ENCODE measurements at regions of chr5 and their contacts with region 1.

Region 1: DNA sequence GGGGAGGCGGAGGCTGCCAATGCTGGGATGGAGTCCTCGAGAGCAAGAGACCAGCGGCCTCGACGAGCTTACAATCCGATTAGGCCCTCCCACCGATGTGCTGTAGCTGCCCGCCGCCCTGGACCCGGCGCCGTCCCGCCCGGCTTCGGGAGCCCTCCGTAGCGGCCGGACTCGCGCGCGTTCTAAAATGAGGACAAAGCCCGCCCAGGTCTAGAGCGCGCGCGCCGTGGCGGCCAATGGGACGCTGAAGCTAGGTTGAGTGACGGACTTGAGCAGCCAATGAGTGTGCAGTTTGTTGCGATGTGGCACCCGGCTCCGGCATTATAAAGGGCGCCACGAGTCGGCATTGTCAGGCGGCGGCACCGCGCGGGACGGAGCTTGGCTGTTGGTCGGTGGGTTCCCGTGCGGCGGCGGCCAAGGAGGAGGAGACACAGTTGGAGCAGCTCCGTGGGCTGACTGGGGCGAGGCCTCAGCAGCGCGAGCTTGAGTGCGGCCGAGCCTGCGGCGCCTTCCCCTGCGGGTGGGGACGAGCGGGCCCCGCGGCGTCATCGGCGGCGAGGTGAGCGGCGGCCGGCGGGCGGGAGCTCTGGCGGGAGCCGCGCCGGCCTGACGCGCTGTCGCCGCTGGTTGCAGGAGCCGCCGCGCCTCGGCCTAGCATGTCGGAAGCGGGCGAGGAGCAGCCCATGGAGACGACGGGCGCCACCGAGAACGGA is at the start of gene HNRNPAB:
- DNase-seq: peak; percentile 94 to 95 (median 95)
- H3K4me3 ChIP-seq: peak within 1 kb of the TSS; percentile 85 to 98
- H3K4me3 Mint-ChIP-seq: peak within 1 kb of the TSS; percentile 97 to 100 (median 99)
- H3K27ac ChIP-seq: peak within 1 kb of the TSS; percentile 73
- H3K27ac Mint-ChIP-seq: peak within 1 kb of the TSS; percentile 97 to 100 (median 99)
- H3K4me1 ChIP-seq: peaks cover 37% of the 10 kb centered on the region
- H3K4me1 Mint-ChIP-seq: peaks cover 15 to 46% (median 27%) of the 10 kb centered on the region in 4 donors
- H3K27me3 ChIP-seq: no peaks in the 10 kb centered on the region
- H3K27me3 Mint-ChIP-seq: peaks cover 2% of the 10 kb centered on the region in 2 donors
- total RNA-seq, gene HNRNPAB: 82.1 to 85.3 TPM

Region 2: DNA sequence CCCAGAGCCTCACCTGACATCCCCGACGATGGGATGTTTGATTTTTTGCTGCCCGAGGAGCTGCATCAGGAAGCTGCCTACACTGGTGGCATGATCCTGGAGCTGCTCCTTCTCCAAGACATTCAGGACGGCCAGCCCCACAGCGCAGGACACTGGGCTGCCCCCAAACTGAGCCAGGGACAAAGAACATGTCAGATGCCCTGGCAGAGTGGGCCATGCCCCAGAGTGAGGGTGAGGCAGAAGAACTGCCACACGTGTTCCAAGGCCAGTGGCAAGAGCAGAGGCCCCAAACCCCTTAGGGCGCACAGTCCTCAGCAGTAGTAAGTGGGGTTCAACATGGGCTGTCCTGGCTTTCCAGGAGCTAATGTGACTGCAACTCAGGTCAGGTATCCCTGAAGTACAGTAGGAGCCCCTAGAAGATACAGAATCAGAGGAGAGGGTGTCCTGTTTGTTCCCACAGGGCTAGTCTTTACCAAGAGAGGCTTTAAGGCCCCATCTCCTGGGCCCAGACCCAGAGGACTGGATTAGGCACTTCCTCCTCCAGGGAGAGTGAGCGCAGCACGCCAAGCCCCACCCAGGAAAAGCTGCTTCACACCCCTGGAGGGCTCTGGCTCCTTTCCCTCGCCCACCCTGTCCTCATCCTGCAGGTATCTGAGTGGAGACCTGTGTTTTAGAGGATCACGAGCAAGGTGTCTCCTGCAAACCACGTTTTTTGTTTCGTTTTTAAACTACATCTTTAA is 11.1 kb after region 1 on chr5:
- CTCF ChIA-PET with region 1: interaction called, 8 read pairs
- POLR2A ChIA-PET with region 1: interaction called, 16 read pairs
- intact Hi-C with region 1: no loop called
- DNase-seq: no peak
- H3K4me3 ChIP-seq: no peak overlapping the region
- H3K4me3 Mint-ChIP-seq: no peak overlapping the region
- H3K27ac ChIP-seq: no peak overlapping the region
- H3K27ac Mint-ChIP-seq: peak overlapping the region in 4 of 7 donors; percentile 11 to 51 (median 36)
- H3K4me1 ChIP-seq: peaks cover 3% of the 10 kb centered on the region
- H3K4me1 Mint-ChIP-seq: peaks cover 10 to 13% (median 12%) of the 10 kb centered on the region in 4 donors
- H3K27me3 ChIP-seq: no peaks in the 10 kb centered on the region
- H3K27me3 Mint-ChIP-seq: no peaks in the 10 kb centered on the region

Region 3: GRCh38 chr5:178232124-178232919 is 28.0 kb after region 1 on chr5 and contains the start of gene PHYKPL:
- CTCF ChIA-PET with region 1: interaction called, 4 read pairs
- POLR2A ChIA-PET with region 1: interaction called, 72 read pairs
- intact Hi-C with region 1: loop called (anchors 1 kb)
- DNase-seq: peak; percentile 61 to 71 (median 65)
- H3K4me3 ChIP-seq: peak within 1 kb of the TSS; percentile 62 to 74
- H3K4me3 Mint-ChIP-seq: peak within 1 kb of the TSS; percentile 82 to 90 (median 86)
- H3K27ac ChIP-seq: peak within 1 kb of the TSS; percentile 82
- H3K27ac Mint-ChIP-seq: peak within 1 kb of the TSS; percentile 87 to 95 (median 91)
- H3K4me1 ChIP-seq: peaks cover 49% of the 10 kb centered on the region
- H3K4me1 Mint-ChIP-seq: peaks cover 25 to 74% (median 56%) of the 10 kb centered on the region in 4 donors
- H3K27me3 ChIP-seq: no peaks in the 10 kb centered on the region
- H3K27me3 Mint-ChIP-seq: no peaks in the 10 kb centered on the region
- total RNA-seq, gene PHYKPL: 234 to 251 TPM

Region 4: DNA sequence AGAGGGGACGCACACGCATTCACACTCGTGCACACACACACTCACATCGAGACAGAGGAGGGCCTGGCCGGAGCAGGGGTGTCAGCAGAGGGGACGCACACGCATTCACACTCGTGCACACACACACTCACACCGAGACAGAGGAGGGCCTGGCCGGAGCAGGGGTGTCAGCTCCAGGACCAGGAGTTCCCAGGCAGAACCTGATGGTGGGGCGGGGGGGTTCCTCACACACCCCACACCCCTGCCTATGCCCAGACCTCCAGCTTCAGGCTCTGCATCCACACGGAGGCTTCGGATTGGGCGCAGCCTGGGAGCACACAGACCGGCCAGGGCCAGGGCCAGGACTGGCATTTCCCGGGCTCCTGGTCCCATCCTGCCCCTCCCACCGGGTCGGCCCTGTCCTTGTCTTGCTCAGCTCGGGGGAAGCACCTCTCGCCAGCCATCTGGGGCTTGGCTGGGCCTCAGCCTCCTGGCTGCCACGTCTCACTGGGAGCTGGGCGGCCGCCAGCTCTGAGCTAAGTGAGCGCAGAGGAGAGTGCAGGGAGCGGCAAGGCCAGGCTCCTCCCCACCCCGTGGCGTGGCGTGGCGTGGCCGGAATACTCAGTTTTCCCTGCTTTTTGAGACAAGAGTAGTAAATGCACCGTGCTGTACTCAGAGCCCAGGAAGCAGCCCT is 1109.6 kb after region 1 on chr5:
- CTCF ChIA-PET with region 1: no interaction called
- POLR2A ChIA-PET with region 1: no interaction called
- intact Hi-C with region 1: no loop called
- DNase-seq: no peak
- H3K4me3 ChIP-seq: no peak overlapping the region
- H3K4me3 Mint-ChIP-seq: no peak overlapping the region
- H3K27ac ChIP-seq: no peak overlapping the region
- H3K27ac Mint-ChIP-seq: no peak overlapping the region
- H3K4me1 ChIP-seq: no peaks in the 10 kb centered on the region
- H3K4me1 Mint-ChIP-seq: peaks cover 0 to 1% (median 0%) of the 10 kb centered on the region in 4 donors
- H3K27me3 ChIP-seq: no peaks in the 10 kb centered on the region
- H3K27me3 Mint-ChIP-seq: peaks cover 3 to 5% of the 10 kb centered on the region in 2 donors

Measured in CD4-positive, alpha-beta memory T cell (primary cell).